ENCODE measurements at regions of chrX and their contacts with region 1.

Region 1: GRCh38 chrX:19747652-19748610 is 139.5 kb downstream of the SH3KBP1 start:
- DNase-seq: peak; percentile 73
- H3K4me3 Mint-ChIP-seq: peak overlapping the region; percentile 63
- H3K27ac Mint-ChIP-seq: peak overlapping the region; percentile 90
- H3K4me1 Mint-ChIP-seq: peaks cover 82% of the 10 kb centered on the region
- H3K27me3 Mint-ChIP-seq: no peaks in the 10 kb centered on the region

Region 2: DNA sequence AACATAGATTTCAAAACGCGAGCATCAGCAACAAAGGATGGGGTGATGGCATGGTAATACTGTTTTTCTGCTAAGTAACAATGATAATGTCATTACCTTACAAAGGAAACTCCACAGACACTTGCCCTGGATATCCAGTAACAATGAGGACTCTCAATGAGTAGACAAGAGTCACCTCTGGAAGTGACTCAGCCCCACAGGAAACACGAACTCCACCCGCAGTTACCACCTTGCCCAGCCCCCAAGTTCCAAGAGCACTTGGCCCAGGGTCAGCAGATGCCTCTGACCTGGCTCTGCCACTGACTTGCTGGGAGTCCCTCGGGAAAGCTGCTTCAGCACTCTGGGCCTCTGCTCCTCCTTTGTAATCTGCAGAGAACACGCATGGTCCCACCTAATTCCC is 122.3 kb before region 1 on chrX:
- intact Hi-C with region 1: loop called (anchors 5 kb)
- DNase-seq: peak; percentile 16
- H3K4me3 Mint-ChIP-seq: no peak overlapping the region
- H3K27ac Mint-ChIP-seq: peak overlapping the region; percentile 92
- H3K4me1 Mint-ChIP-seq: peaks cover 49% of the 10 kb centered on the region
- H3K27me3 Mint-ChIP-seq: no peaks in the 10 kb centered on the region

Region 3: DNA sequence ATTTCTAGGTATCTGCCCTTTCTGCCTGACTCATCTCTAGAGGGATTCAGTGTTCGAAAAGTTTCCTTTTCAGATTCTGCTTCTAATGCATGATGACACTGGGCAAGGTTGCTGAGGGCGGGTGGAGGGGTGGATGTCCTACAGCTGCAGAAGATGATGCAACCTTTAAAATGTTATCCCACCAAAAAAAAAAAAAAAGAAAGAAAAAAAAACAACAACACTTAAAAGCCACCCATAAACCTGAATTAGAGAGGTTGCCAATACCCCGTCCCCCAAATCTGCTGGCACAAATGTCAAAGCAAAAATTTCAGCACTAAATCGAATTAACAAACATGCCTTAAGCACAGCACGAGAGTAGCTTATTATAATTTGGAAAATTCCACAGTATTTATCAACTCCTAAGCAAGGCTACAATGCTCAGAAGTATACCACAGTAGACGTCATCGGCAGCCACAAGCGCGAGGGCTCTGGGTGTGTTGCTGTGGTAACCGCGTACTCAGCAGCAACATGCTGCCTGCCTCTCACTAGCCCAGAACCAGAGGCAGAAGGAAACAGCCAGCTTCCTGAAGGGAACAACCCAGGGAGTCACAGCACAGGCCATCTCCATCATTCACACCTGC is 65.1 kb before region 1 on chrX:
- intact Hi-C with region 1: loop called (anchors 5 kb)
- DNase-seq: peak; percentile 71
- H3K4me3 Mint-ChIP-seq: peak overlapping the region; percentile 75
- H3K27ac Mint-ChIP-seq: peak overlapping the region; percentile 98
- H3K4me1 Mint-ChIP-seq: peaks cover 73% of the 10 kb centered on the region
- H3K27me3 Mint-ChIP-seq: no peaks in the 10 kb centered on the region

Region 4: GRCh38 chrX:19776753-19777152 is 28.8 kb after region 1 on chrX:
- intact Hi-C with region 1: loop called (anchors 2 kb)
- DNase-seq: peak; percentile 25
- H3K4me3 Mint-ChIP-seq: no peak overlapping the region
- H3K27ac Mint-ChIP-seq: peak overlapping the region; percentile 78
- H3K4me1 Mint-ChIP-seq: peaks cover 45% of the 10 kb centered on the region
- H3K27me3 Mint-ChIP-seq: no peaks in the 10 kb centered on the region

Region 5: DNA sequence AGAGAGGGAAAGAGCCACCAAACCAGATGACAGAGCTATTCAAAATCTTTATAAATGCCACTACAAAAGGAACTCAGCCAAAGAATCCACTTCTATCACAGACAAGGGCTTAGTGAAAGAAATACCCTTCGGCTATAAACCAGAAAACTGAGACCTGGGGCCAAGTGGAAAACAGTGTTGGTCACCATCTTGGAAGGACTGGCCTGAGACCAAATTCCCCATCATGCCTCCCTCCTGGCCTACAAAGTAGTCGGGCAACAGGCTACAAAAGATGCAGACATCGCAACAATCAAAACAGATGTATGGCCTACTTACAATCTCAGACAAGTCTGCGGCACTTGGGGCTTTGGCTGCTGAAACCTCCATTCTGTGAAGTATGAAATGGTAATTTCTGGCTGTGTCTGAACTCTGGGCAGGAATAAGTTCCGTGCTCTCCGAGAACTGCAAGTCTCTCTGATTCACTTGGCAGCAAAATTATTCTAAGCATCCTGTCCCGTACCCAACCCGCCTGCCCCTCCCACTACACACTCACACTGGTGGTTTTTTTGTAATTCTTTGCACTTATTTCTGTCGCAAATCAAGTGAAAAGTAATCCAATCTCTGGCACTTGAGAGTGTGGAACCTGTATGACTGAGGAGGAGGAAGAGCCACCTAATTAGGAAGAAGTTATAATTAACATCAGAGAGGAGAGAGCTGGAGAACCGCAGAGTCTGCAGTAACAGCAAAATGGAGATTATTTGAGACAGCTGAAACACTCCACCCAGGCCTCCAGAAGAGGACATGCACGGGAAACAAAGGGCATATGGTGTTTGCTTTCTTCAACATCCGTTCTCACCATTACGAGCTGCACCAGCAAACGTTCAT is 51.6 kb after region 1 on chrX:
- intact Hi-C with region 1: loop called (anchors 2 kb)
- DNase-seq: peak; percentile 28
- H3K4me3 Mint-ChIP-seq: peak overlapping the region; percentile 86
- H3K27ac Mint-ChIP-seq: peak overlapping the region; percentile 98
- H3K4me1 Mint-ChIP-seq: peaks cover 61% of the 10 kb centered on the region
- H3K27me3 Mint-ChIP-seq: no peaks in the 10 kb centered on the region

Region 6: GRCh38 chrX:19840899-19841648 is 93.1 kb after region 1 on chrX:
- intact Hi-C with region 1: loop called (anchors 2 kb)
- DNase-seq: peak; percentile 59
- H3K4me3 Mint-ChIP-seq: peak overlapping the region; percentile 68
- H3K27ac Mint-ChIP-seq: peak overlapping the region; percentile 94
- H3K4me1 Mint-ChIP-seq: peaks cover 48% of the 10 kb centered on the region
- H3K27me3 Mint-ChIP-seq: no peaks in the 10 kb centered on the region

Region 7: DNA sequence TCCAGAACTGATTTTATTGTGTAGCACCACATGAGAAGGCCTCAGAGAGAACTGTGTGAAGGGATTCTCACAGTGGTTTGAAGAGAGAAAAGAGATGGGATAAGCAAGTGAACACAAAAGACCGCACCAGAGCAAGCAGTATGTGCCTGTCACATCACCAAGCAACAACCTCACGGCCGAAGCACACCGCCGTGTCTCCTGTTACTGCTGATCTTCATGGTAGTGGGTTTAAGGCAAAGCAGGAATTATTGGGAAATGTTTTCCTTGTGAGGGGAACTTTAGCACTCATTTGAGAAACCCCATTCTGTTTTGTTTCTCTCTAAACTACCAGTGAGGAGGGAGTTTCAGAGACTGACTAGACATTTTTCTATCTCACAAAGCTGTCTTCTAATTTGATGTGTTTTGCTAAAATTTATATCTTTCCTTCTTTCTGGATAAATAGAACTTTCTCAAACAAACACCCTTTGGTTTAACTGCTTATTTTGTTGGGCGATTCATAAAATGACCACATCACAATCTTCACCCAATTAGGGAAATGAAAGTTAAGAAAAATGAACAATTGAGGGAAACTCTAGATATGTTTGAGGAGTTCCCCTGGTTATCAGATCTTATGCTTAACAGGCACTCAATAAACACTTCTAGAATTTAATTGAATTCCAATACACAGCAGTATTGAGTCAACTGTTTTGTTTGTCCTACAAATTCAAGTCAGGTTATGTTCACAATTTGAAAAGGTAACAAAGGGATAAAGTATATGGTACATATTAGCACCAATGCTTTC is 123.0 kb after region 1 on chrX:
- intact Hi-C with region 1: loop called (anchors 5 kb)
- DNase-seq: no peak
- H3K4me3 Mint-ChIP-seq: peak overlapping the region; percentile 8
- H3K27ac Mint-ChIP-seq: peak overlapping the region; percentile 81
- H3K4me1 Mint-ChIP-seq: peaks cover 68% of the 10 kb centered on the region
- H3K27me3 Mint-ChIP-seq: no peaks in the 10 kb centered on the region

Measured in activated T-helper 2 cell treated with anti-CD3 and anti-CD28 coated beads, Interferon-gamma antibody, Interleukin-2, Interleukin-4, amounts not matched to agents 10 μg/mL and 5 μg/mL and 100 μg/mL, durations not matched to agents 14 hours and 24 hours and 36 hours (primary cell).